ENCODE measurements at regions of chr15 and their contacts with region 1.

Region 1: DNA sequence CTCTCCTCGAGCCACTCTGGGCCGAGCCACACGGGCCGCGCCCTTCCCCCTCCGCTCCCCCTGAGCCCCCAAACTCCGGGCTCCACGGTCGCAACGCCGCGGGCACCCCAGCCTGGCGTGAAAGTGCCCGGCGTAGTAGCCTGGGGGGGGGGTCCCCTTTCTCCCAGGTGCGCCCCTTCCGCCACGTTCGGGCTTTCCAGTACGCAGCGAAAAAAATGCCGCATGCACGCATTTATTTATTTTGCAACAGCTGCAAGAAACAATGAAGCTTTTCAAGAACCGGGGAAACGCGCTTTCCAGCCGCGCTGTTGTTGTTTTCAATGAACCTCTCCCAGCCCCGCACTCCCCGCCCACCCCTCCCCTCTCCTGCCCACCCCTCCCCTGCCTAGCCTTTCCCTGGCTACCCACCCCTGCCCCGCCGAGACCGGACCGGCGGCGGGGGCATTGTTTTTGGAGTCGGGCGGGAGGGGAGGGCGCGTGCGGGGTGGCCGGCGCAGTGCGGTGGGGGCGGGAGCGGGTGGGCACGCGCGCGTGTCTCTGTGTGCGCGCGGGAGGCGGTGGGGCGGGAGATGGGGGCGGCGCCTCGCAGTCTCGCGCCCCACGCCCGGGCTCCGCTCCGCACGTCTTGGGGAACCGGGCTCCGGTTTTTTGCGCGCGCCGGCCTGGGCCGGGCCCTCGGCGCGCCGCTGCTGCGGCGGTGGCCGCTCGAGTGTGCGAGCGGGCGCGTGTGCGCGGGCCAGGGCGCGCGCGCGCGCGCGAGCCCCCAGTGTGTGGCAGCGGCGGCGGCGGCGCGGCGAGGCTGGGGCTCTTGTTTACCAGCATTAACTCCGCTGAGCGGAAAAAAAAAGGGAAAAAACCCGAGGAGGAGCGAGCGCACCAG is at the start of gene IGF1R:
- DNase-seq: peak; percentile 96
- H3K4me3 ChIP-seq: peak within 1 kb of the TSS; percentile 87
- H3K27ac ChIP-seq: peak within 1 kb of the TSS; percentile 88
- H3K4me1 ChIP-seq: peaks cover 14% of the 10 kb centered on the region
- H3K27me3 ChIP-seq: peaks cover 35% of the 10 kb centered on the region
- CTCF ChIP-seq: 0 out of 2 replicates have a peak, but pooled peaks have one; percentile 15
- total RNA-seq, gene IGF1R: 34.9 and 41.2 TPM in 2 replicates

Region 2: GRCh38 chr15:98850961-98851573 is 203.1 kb after region 1 on chr15:
- CTCF ChIA-PET with region 1: interaction called, 4 read pairs
- POLR2A ChIA-PET with region 1: no interaction called
- intact Hi-C with region 1: loop called (anchors 1 kb)
- DNase-seq: peak; percentile 89
- H3K4me3 ChIP-seq: peak overlapping the region; percentile 59
- H3K27ac ChIP-seq: no peak overlapping the region
- H3K4me1 ChIP-seq: peaks cover 29% of the 10 kb centered on the region
- H3K27me3 ChIP-seq: no peaks in the 10 kb centered on the region
- CTCF ChIP-seq: peak; percentile 88

Region 3: GRCh38 chr15:98865397-98866339 is 217.7 kb after region 1 on chr15:
- CTCF ChIA-PET with region 1: interaction called, 4 read pairs
- POLR2A ChIA-PET with region 1: no interaction called
- intact Hi-C with region 1: loop called (anchors 5 kb)
- DNase-seq: peak; percentile 96
- H3K4me3 ChIP-seq: peak overlapping the region; percentile 44
- H3K27ac ChIP-seq: peak overlapping the region; percentile 87
- H3K4me1 ChIP-seq: peaks cover 45% of the 10 kb centered on the region
- H3K27me3 ChIP-seq: no peaks in the 10 kb centered on the region
- CTCF ChIP-seq: no peak